Endothelial cell of umbilical vein (primary cell): ENCODE measurements at regions of chr4 and their contacts with region 1.

Region 1: GRCh38 chr4:108018040-108018883 is 28.6 kb downstream of the HADH start:
- DNase-seq: peak; percentile 75
- H3K4me3 ChIP-seq: no peak overlapping the region
- H3K27ac ChIP-seq: no peak overlapping the region
- H3K4me1 ChIP-seq: no peaks in the 10 kb centered on the region
- H3K27me3 ChIP-seq: no peaks in the 10 kb centered on the region
- CTCF ChIP-seq: peak; percentile 81
- POLR2A ChIP-seq: no peak

Region 2: DNA sequence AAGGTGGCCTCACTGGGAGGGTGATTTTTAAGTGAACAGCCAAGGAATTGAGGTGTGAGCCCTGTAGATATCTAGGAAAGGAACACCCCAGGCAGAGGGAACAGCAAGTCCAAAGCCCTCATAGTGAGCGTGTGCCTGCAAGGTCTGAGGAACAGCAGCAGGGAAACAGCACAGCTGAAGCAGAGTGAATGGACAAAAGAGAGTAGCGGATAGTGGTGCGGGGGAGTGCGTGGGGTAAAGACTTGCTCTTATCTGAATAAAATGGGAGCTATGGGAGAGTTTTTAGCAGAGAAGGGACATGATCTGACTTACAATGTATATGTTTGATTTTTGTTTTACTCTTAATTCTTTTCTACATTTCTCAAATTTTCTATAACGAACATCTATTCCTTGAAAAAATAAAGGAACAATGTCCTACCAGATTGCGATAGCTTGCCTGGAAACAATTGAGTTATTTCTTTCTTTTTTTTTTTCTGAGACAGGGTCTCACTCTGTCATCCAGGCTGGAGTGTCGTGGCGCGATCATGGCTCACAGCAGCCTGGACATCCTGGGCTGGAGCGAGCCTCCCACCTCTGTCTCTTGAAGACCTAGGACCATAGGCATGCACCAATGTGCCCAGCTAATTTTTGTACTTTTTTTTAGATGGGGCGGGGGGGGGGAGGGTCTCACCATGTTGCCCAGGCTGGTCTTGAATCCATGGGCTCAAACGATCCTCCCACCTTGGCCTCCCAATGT is 48.0 kb before region 1 on chr4:
- CTCF ChIA-PET with region 1: no interaction called
- POLR2A ChIA-PET with region 1: no interaction called
- dilution Hi-C with region 1: no loop called
- intact Hi-C with region 1: no loop called
- DNase-seq: no peak
- H3K4me3 ChIP-seq: no peak overlapping the region
- H3K27ac ChIP-seq: no peak overlapping the region
- H3K4me1 ChIP-seq: no peaks in the 10 kb centered on the region
- H3K27me3 ChIP-seq: peaks cover 0 to 6% of the 10 kb centered on the region in 2 experiments
- CTCF ChIP-seq: no peak
- POLR2A ChIP-seq: no peak

Region 3: GRCh38 chr4:107989537-107990386 is 28.5 kb before region 1 on chr4 and contains the start of gene HADH:
- CTCF ChIA-PET with region 1: interaction called, 12 read pairs
- POLR2A ChIA-PET with region 1: no interaction called
- dilution Hi-C with region 1: no loop called
- intact Hi-C with region 1: no loop called
- DNase-seq: peak; percentile 93
- H3K4me3 ChIP-seq: peak within 1 kb of the TSS; percentile 52 to 66 (median 64)
- H3K27ac ChIP-seq: peak within 1 kb of the TSS; percentile 26
- H3K4me1 ChIP-seq: peaks cover 6% of the 10 kb centered on the region
- H3K27me3 ChIP-seq: no peaks in the 10 kb centered on the region
- CTCF ChIP-seq: no peak
- POLR2A ChIP-seq: peak; percentile 45
- total RNA-seq, gene HADH: 20.3 and 22.1 TPM in 2 replicates

Region 4: DNA sequence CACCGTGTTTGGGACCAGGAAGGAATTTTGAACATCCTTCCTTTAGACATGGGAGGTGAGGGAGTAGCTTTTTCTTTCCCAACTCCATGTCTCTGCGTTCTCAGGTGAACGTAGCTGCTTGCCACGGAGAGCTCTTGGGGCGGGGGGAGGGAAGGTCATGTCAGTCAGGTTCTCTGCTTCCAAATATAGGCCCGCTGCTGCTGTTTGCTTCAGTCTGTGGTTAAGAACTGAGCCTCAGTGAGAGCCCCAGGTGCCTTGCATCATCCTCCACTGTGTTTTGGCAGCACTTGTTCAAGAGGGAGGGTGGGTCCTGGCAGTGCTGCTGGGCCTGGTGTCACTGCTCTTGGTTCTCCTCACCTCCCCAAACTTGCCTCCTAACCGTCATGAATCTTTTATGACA is 18.0 kb after region 1 on chr4:
- CTCF ChIA-PET with region 1: interaction called, 39 read pairs
- POLR2A ChIA-PET with region 1: no interaction called
- dilution Hi-C with region 1: no loop called
- intact Hi-C with region 1: no loop called
- DNase-seq: no peak
- H3K4me3 ChIP-seq: no peak overlapping the region
- H3K27ac ChIP-seq: no peak overlapping the region
- H3K4me1 ChIP-seq: no peaks in the 10 kb centered on the region
- H3K27me3 ChIP-seq: no peaks in the 10 kb centered on the region
- CTCF ChIP-seq: no peak
- POLR2A ChIP-seq: no peak

Region 5: GRCh38 chr4:108492816-108493595 is 474.7 kb after region 1 on chr4:
- CTCF ChIA-PET with region 1: interaction called, 42 read pairs
- POLR2A ChIA-PET with region 1: no interaction called
- dilution Hi-C with region 1: no loop called
- intact Hi-C with region 1: loop called (anchors 1 kb)
- DNase-seq: no peak
- H3K4me3 ChIP-seq: no peak overlapping the region
- H3K27ac ChIP-seq: no peak overlapping the region
- H3K4me1 ChIP-seq: no peaks in the 10 kb centered on the region
- H3K27me3 ChIP-seq: no peaks in the 10 kb centered on the region
- CTCF ChIP-seq: peak; percentile 50 to 58
- POLR2A ChIP-seq: no peak

Region 6: GRCh38 chr4:108570993-108571569 is 552.8 kb after region 1 on chr4:
- CTCF ChIA-PET with region 1: interaction called, 246 read pairs
- POLR2A ChIA-PET with region 1: no interaction called
- dilution Hi-C with region 1: no loop called
- intact Hi-C with region 1: loop called (anchors 1 kb)
- DNase-seq: no peak
- H3K4me3 ChIP-seq: no peak overlapping the region
- H3K27ac ChIP-seq: no peak overlapping the region
- H3K4me1 ChIP-seq: no peaks in the 10 kb centered on the region
- H3K27me3 ChIP-seq: peaks cover 5% of the 10 kb centered on the region in 2 experiments
- CTCF ChIP-seq: no peak
- POLR2A ChIP-seq: no peak

Region 7: DNA sequence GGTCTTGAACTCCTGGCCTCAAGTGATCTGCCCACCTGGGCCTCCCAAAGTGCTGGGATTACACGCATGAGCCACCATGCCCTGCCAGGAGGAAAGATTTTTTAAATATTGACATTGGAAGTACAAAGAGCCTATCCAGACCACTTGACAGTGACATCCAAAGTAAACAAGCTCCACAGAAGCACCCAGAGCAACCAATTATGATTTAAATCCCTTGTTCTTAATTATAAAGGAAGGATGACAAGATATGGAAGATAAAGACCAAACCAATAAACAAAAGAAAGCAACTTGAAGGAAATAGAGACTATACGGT is 574.4 kb after region 1 on chr4:
- CTCF ChIA-PET with region 1: interaction called, 15 read pairs
- POLR2A ChIA-PET with region 1: no interaction called
- dilution Hi-C with region 1: no loop called
- intact Hi-C with region 1: no loop called
- DNase-seq: peak; percentile 24
- H3K4me3 ChIP-seq: no peak overlapping the region
- H3K27ac ChIP-seq: peak overlapping the region; percentile 93
- H3K4me1 ChIP-seq: peaks cover 18% of the 10 kb centered on the region
- H3K27me3 ChIP-seq: no peaks in the 10 kb centered on the region
- CTCF ChIP-seq: no peak
- POLR2A ChIP-seq: no peak

Region 8: GRCh38 chr4:108783665-108784463 is 765.6 kb after region 1 on chr4:
- CTCF ChIA-PET with region 1: interaction called, 11 read pairs
- POLR2A ChIA-PET with region 1: no interaction called
- dilution Hi-C with region 1: no loop called
- intact Hi-C with region 1: no loop called
- DNase-seq: peak; percentile 18
- H3K4me3 ChIP-seq: no peak overlapping the region
- H3K27ac ChIP-seq: no peak overlapping the region
- H3K4me1 ChIP-seq: peaks cover 5% of the 10 kb centered on the region
- H3K27me3 ChIP-seq: no peaks in the 10 kb centered on the region
- CTCF ChIP-seq: no peak
- POLR2A ChIP-seq: no peak